ENCODE measurements at regions of chr12 and their contacts with region 1.

Region 1: GRCh38 chr12:51172515-51173431 is at the start of gene TFCP2:
- DNase-seq: peak; percentile 81 to 93 (median 91)
- ATAC-seq: peak; percentile 98
- H3K4me3 ChIP-seq: peak within 1 kb of the TSS; percentile 98
- H3K4me3 Mint-ChIP-seq: peak within 1 kb of the TSS in 5 of 10 donors; percentile 77 to 89 (median 87)
- H3K27ac ChIP-seq: peak within 1 kb of the TSS; percentile 99
- H3K27ac Mint-ChIP-seq: peak within 1 kb of the TSS in 6 of 9 donors; percentile 56 to 90 (median 82)
- H3K4me1 ChIP-seq: peaks cover 5 to 7% of the 10 kb centered on the region in 2 donors
- H3K4me1 Mint-ChIP-seq: peaks cover 9 to 24% (median 14%) of the 10 kb centered on the region in 7 donors
- H3K27me3 ChIP-seq: no peaks in the 10 kb centered on the region
- H3K27me3 Mint-ChIP-seq: no peaks in the 10 kb centered on the region
- total RNA-seq, gene TFCP2: 23.4 to 42.3 (median 36.6) TPM

Region 2: DNA sequence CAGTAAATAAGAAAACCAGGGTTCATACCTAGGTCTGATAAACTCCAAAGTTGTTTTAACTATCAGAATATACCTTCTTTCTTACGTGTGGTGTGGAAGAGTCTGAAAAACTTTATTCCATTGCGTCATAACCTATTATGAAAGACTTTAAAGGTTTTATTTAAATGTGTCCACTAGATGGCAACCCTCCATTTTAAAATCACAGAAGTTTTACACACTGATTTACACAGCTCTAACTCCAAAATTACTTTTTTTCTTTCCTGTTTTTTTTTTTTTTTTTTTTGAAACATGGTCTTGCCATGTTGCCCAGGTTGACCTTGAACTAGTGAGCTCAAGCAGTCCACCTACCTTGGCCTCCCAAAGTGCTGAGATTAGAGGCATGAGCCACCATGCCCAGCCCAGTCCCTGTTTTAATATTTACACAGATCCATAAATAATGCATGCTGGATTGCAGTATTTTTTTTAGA is 347.4 kb before region 1 on chr12:
- CTCF ChIA-PET with region 1: no interaction called
- POLR2A ChIA-PET with region 1: no interaction called
- intact Hi-C with region 1: loop called in 1 of 2 experiments (anchors 2 kb)
- DNase-seq: peak in 7 of 9 donors; percentile 45 to 76 (median 69)
- ATAC-seq: peak; percentile 91
- H3K4me3 ChIP-seq: no peak overlapping the region
- H3K4me3 Mint-ChIP-seq: peak overlapping the region in 2 of 10 donors; percentile 34 to 77
- H3K27ac ChIP-seq: peak overlapping the region; percentile 73
- H3K27ac Mint-ChIP-seq: peak overlapping the region; percentile 56 to 99 (median 91)
- H3K4me1 ChIP-seq: peaks cover 0 to 4% of the 10 kb centered on the region in 2 donors
- H3K4me1 Mint-ChIP-seq: peaks cover 0 to 9% (median 6%) of the 10 kb centered on the region in 7 donors
- H3K27me3 ChIP-seq: no peaks in the 10 kb centered on the region
- H3K27me3 Mint-ChIP-seq: no peaks in the 10 kb centered on the region

Region 3: DNA sequence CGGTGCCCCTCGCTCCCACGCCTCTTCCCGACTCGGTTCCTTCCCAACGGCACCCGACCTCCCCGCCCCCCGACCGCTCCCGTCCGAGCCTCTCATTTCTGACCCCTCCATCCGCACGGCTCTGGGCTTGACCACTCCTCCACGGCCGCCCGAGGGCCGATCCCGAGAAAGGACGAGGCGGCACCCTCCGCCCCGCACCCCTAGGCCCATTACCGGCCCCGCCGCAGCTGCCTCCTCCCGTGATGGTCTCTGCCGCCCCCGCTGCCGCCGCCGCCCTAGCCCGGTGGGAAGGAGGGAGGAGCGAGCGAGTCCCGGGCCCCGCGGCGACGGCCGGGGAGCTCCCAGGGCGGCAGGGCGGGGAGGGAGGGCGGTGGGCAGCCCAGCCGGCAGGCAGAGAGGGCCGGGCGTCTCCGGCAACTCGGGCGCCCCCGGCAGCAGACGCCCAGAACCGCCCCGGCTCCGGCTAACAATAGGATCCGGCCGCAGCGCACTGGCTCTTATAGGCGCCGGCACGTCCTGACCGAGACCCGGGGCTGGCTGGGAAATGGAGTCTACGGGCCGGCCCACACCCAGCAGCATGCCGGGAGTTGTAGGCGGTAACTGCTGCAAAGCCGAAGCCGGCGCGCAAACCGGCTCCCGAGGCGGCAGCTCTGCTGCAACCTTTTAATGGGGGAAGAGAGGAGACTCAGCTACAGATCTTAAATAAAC is 89.5 kb before region 1 on chr12 and contains the start of gene CSRNP2:
- CTCF ChIA-PET with region 1: no interaction called
- POLR2A ChIA-PET with region 1: interaction called, 3 read pairs
- intact Hi-C with region 1: loop called (anchors 1 to 2 kb)
- DNase-seq: peak; percentile 90 to 95 (median 94)
- ATAC-seq: peak; percentile 100
- H3K4me3 ChIP-seq: peak within 1 kb of the TSS; percentile 78
- H3K4me3 Mint-ChIP-seq: peak within 1 kb of the TSS; percentile 89 to 100 (median 96)
- H3K27ac ChIP-seq: peak within 1 kb of the TSS; percentile 97
- H3K27ac Mint-ChIP-seq: peak within 1 kb of the TSS; percentile 89 to 98 (median 93)
- H3K4me1 ChIP-seq: peaks cover 7% of the 10 kb centered on the region in 2 donors
- H3K4me1 Mint-ChIP-seq: peaks cover 22 to 46% (median 43%) of the 10 kb centered on the region in 7 donors
- H3K27me3 ChIP-seq: no peaks in the 10 kb centered on the region
- H3K27me3 Mint-ChIP-seq: no peaks in the 10 kb centered on the region
- total RNA-seq, gene CSRNP2: 20.0 to 38.7 (median 23.4) TPM

Region 4: DNA sequence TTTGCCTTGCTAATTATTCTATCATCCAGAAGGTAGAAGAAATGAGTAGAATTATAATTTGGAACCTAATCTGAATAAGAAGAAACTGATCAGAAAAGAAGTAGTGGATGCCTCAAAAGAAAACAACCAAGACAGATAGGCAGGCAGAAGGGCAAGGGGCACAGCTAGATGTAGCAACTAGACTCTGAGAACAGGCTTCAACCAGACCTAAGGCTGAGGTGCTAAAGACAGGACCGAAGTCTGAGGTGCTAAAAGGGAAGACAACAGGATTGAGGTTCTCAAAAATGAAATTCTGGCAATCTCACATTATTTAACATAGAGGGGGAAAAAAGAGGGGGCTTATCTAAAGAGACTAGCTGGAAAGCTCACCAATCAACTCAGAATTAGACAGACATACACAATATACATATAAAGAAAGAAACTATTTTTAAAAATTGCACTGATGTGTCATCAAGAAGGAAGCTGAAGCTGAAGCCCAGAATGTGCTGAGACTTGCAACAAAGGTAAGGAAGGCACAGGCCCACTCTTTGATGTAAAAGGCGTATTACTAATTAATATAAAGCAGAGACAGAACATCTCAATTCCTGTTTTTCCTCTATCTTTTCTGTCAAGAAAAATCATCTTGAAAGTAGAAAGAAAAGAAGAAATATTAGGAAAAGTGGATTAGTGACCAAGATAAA is 45.6 kb before region 1 on chr12:
- CTCF ChIA-PET with region 1: no interaction called
- POLR2A ChIA-PET with region 1: no interaction called
- intact Hi-C with region 1: loop called in 1 of 2 experiments (anchors 5 kb)
- DNase-seq: no peak
- ATAC-seq: no peak
- H3K4me3 ChIP-seq: no peak overlapping the region
- H3K4me3 Mint-ChIP-seq: no peak overlapping the region
- H3K27ac ChIP-seq: no peak overlapping the region
- H3K27ac Mint-ChIP-seq: peak overlapping the region in 4 of 9 donors; percentile 20 to 80 (median 54)
- H3K4me1 ChIP-seq: no peaks in the 10 kb centered on the region
- H3K4me1 Mint-ChIP-seq: peaks cover 0 to 23% (median 7%) of the 10 kb centered on the region in 7 donors
- H3K27me3 ChIP-seq: no peaks in the 10 kb centered on the region
- H3K27me3 Mint-ChIP-seq: no peaks in the 10 kb centered on the region

Region 5: DNA sequence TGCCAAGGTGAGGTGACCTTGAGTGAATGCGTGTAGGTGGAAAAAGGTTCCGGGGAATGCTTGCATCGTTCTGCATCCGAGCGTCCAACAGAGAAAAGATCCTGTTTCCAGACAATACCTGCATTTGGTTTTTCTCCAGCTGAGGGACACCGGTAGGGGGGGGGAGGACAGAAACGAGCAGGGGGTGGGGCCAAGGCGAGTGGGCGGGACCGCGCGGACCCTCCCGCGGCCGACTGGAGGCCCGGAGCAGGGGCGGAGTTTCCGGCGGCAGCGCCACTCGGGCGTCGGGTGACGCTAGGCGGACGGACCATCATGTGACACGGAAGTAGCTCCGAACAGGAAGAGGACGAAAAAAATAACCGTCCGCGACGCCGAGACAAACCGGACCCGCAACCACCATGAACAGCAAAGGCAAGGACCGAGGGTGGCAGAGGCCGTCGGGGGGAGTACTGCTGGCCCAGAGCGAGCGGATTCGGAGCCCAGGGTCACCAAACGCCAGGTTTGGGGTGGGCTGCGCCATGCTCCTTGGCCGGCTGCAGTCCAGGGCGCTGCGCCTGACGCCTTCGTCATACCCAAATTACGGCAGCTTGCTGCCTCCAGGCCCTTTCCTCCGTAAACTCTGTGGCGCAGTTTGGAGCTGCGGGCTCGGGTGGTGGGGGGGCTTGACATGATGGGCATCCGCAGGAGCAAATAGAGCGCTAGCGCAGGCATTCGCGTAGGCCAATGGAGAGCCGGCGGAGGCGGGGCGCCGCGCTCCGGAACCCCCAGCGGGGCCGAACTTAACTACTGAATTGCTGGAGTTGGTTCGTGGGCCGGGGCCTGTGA is 65.9 kb after region 1 on chr12 and contains the start of gene DAZAP2:
- CTCF ChIA-PET with region 1: no interaction called
- POLR2A ChIA-PET with region 1: interaction called, 3 read pairs
- intact Hi-C with region 1: loop called (anchors 1 kb)
- DNase-seq: peak; percentile 82 to 94 (median 92)
- ATAC-seq: peak; percentile 93
- H3K4me3 ChIP-seq: peak within 1 kb of the TSS; percentile 98
- H3K4me3 Mint-ChIP-seq: peak within 1 kb of the TSS; percentile 91 to 99 (median 97)
- H3K27ac ChIP-seq: peak within 1 kb of the TSS; percentile 100
- H3K27ac Mint-ChIP-seq: peak within 1 kb of the TSS; percentile 97 to 100 (median 100)
- H3K4me1 ChIP-seq: peaks cover 24 to 29% of the 10 kb centered on the region in 2 donors
- H3K4me1 Mint-ChIP-seq: peaks cover 36 to 50% (median 42%) of the 10 kb centered on the region in 7 donors
- H3K27me3 ChIP-seq: no peaks in the 10 kb centered on the region
- H3K27me3 Mint-ChIP-seq: peaks cover 0 to 4% (median 0%) of the 10 kb centered on the region in 5 donors
- total RNA-seq, gene DAZAP2: 231 to 306 (median 271) TPM

Region 6: GRCh38 chr12:51368640-51369517 is 196.1 kb after region 1 on chr12:
- CTCF ChIA-PET with region 1: no interaction called
- POLR2A ChIA-PET with region 1: no interaction called
- intact Hi-C with region 1: loop called in 1 of 2 experiments (anchors 1 kb)
- DNase-seq: peak; percentile 53 to 96 (median 95)
- ATAC-seq: peak; percentile 96
- H3K4me3 ChIP-seq: peak overlapping the region; percentile 57
- H3K4me3 Mint-ChIP-seq: peak overlapping the region; percentile 62 to 89 (median 80)
- H3K27ac ChIP-seq: peak overlapping the region; percentile 73
- H3K27ac Mint-ChIP-seq: peak overlapping the region; percentile 6 to 96 (median 91)
- H3K4me1 ChIP-seq: peaks cover 24 to 35% of the 10 kb centered on the region in 2 donors
- H3K4me1 Mint-ChIP-seq: peaks cover 38 to 72% (median 54%) of the 10 kb centered on the region in 7 donors
- H3K27me3 ChIP-seq: no peaks in the 10 kb centered on the region
- H3K27me3 Mint-ChIP-seq: peaks cover 0 to 5% (median 0%) of the 10 kb centered on the region in 5 donors

Region 7: GRCh38 chr12:51984657-51985056 is 811.9 kb after region 1 on chr12:
- CTCF ChIA-PET with region 1: no interaction called
- POLR2A ChIA-PET with region 1: no interaction called
- intact Hi-C with region 1: no loop called
- DNase-seq: no peak
- ATAC-seq: no peak
- H3K4me3 ChIP-seq: no peak overlapping the region
- H3K4me3 Mint-ChIP-seq: no peak overlapping the region
- H3K27ac ChIP-seq: no peak overlapping the region
- H3K27ac Mint-ChIP-seq: no peak overlapping the region
- H3K4me1 ChIP-seq: no peaks in the 10 kb centered on the region
- H3K4me1 Mint-ChIP-seq: peaks cover 7 to 13% (median 11%) of the 10 kb centered on the region in 7 donors
- H3K27me3 ChIP-seq: no peaks in the 10 kb centered on the region
- H3K27me3 Mint-ChIP-seq: peaks cover 0 to under 1% (median 0%) of the 10 kb centered on the region in 5 donors